ENCODE measurements at regions of chr15 and their contacts with region 1.

Region 1: GRCh38 chr15:74396445-74397238 is 29.2 kb upstream of the CYP11A1 start:
- DNase-seq: no peak
- H3K4me3 Mint-ChIP-seq: peak overlapping the region; percentile 59
- H3K27ac Mint-ChIP-seq: peak overlapping the region; percentile 98
- H3K4me1 Mint-ChIP-seq: peaks cover 82% of the 10 kb centered on the region
- H3K27me3 Mint-ChIP-seq: no peaks in the 10 kb centered on the region

Region 2: GRCh38 chr15:74382004-74382816 is 14.4 kb before region 1 on chr15:
- intact Hi-C with region 1: loop called (anchors 1 kb)
- DNase-seq: peak; percentile 70
- H3K4me3 Mint-ChIP-seq: no peak overlapping the region
- H3K27ac Mint-ChIP-seq: peak overlapping the region; percentile 64
- H3K4me1 Mint-ChIP-seq: peaks cover 63% of the 10 kb centered on the region
- H3K27me3 Mint-ChIP-seq: no peaks in the 10 kb centered on the region

Region 3: GRCh38 chr15:74433592-74434262 is 37.1 kb after region 1 on chr15 and contains the start of gene SEMA7A:
- intact Hi-C with region 1: loop called (anchors 2 kb)
- DNase-seq: peak; percentile 82
- H3K4me3 Mint-ChIP-seq: peak within 1 kb of the TSS; percentile 91
- H3K27ac Mint-ChIP-seq: peak within 1 kb of the TSS; percentile 86
- H3K4me1 Mint-ChIP-seq: peaks cover 67% of the 10 kb centered on the region
- H3K27me3 Mint-ChIP-seq: no peaks in the 10 kb centered on the region
- total RNA-seq, gene SEMA7A: 45.9 and 50.3 TPM in 2 replicates